Common myeloid progenitor, CD34-positive (primary cell): ENCODE measurements at regions of chr14 and their contacts with region 1.

Region 1: GRCh38 chr14:21455911-21456667 is at the start of gene CHD8:
- DNase-seq: peak; percentile 100
- H3K4me3 ChIP-seq: peak within 1 kb of the TSS; percentile 81 to 99 (median 96)
- H3K27ac ChIP-seq: peak within 1 kb of the TSS; percentile 94 to 98
- H3K4me1 ChIP-seq: peaks cover 7 to 14% (median 10%) of the 10 kb centered on the region in 4 experiments
- H3K27me3 ChIP-seq: no peaks in the 10 kb centered on the region

Region 2: GRCh38 chr14:21437063-21437901 is 18.8 kb before region 1 on chr14:
- CTCF ChIA-PET with region 1: interaction called, 23 read pairs
- POLR2A ChIA-PET with region 1: interaction called, 10 read pairs
- DNase-seq: peak; percentile 99
- H3K4me3 ChIP-seq: peak overlapping the region; percentile 60 to 93 (median 83)
- H3K27ac ChIP-seq: peak overlapping the region; percentile 97 to 99
- H3K4me1 ChIP-seq: peaks cover 5 to 26% (median 14%) of the 10 kb centered on the region in 4 experiments
- H3K27me3 ChIP-seq: no peaks in the 10 kb centered on the region

Region 3: GRCh38 chr14:21476925-21477681 is 21.0 kb after region 1 on chr14 and contains the starts of genes RAB2B and TOX4:
- CTCF ChIA-PET with region 1: interaction called, 23 read pairs
- POLR2A ChIA-PET with region 1: interaction called, 11 read pairs
- DNase-seq: peak; percentile 99
- H3K4me3 ChIP-seq: peak within 1 kb of the TSS; percentile 82 to 100 (median 98)
- H3K27ac ChIP-seq: peak within 1 kb of the TSS; percentile 95 to 97
- H3K4me1 ChIP-seq: peaks cover 12 to 19% (median 15%) of the 10 kb centered on the region in 4 experiments
- H3K27me3 ChIP-seq: no peaks in the 10 kb centered on the region

Region 4: DNA sequence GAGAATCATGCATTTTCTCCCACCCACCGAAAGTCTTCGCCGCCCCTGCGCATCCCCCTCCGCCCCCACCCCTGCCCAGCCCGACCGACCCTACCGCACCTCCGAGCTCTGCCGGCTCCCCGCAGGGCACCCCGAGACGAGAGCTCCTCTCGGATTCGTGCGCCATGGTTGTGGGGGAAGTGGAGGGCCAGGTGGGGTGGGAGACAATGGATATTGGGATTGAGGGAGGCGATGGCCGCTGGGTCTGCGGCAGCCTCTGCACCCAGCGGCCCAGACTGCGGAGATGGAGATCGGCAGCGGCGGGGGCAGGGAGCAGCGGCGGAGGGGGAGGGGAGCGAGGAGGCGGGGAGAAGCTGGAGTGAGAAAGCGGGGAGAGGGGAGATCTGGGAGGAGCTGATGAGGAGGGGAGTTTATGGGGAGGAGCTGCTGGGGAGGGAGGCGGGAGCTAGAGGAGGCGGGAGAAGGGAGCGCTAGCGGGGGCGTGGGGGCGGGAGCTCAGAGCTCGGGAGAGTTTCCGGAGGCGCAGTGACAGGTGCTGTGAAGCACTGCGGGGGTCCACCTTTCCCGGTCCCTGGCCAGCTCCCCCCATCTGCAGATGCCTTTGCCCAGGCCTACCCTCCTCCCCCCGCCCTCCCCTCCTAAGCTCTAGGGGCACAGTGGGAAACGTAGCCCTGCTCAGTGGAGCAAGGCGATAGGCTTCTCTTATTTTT is 70.0 kb after region 1 on chr14 and contains the start of gene SALL2:
- CTCF ChIA-PET with region 1: no interaction called
- POLR2A ChIA-PET with region 1: no interaction called
- DNase-seq: peak; percentile 50 to 76 (median 71)
- H3K4me3 ChIP-seq: peak within 1 kb of the TSS; percentile 23 to 89 (median 72)
- H3K27ac ChIP-seq: peak within 1 kb of the TSS in 1 of 2 experiments; percentile 64
- H3K4me1 ChIP-seq: peaks cover 2 to 22% (median 13%) of the 10 kb centered on the region in 4 experiments
- H3K27me3 ChIP-seq: peaks cover 0 to 1% (median 0%) of the 10 kb centered on the region in 5 experiments